ENCODE measurements at regions of chr14 and their contacts with region 1.

Region 1: DNA sequence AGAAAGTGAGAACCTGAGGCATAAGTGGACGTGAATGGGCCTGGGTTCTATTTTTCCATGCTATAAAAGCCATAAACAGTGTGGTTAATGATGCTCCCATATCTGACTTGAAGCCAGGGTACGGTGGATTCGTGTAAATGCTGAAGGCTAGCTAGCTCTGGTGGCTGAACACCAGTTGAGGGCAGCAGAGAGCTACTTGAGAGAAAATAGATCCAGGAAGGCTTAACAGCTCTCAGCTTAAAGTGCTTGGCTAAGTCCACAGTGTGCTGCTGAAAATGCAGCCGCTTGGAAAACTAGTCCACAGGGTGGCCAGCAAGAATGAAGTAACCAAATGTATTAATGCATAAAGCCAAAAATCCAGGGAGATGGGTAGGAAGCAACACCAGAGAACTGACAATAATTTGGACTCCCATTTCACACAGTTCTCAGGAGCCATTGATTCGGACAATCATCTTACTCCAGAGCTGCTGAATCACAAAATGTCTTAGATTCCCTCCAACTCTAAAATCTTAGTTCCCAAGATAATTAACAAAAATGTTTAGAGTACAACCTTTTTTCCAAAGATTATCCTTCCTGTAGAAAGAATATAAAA is 15.0 kb upstream of the FOXG1 start:
- DNase-seq: peak; percentile 50
- ATAC-seq: peak; percentile 98
- H3K4me3 Mint-ChIP-seq: no peak overlapping the region
- H3K27ac Mint-ChIP-seq: no peak overlapping the region
- H3K4me1 Mint-ChIP-seq: peaks cover 18% of the 10 kb centered on the region
- H3K27me3 Mint-ChIP-seq: peaks cover 35% of the 10 kb centered on the region
- CTCF ChIP-seq: no peak; the same call in 1 of the 2 replicates

Region 2: DNA sequence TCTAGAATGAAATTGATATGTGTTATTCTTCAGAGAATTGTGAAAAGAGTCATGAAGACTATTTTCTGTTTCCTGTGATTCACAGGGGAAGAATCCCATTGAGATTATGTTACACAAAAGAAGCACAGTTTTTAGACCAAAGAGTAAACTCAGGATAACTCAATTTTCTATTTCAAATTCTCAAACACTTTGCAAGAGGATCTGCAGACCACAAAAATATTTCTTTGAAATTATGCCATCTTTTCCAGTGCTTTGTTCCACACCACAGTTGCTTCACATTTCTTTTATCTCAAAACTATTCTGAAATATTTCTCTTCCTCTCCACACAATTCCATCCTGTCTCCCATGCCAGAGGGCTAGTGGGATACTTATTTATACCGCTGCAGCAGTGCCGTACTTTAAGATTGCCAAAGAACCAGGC is 173.8 kb before region 1 on chr14:
- CTCF ChIA-PET with region 1: no interaction called
- POLR2A ChIA-PET with region 1: no interaction called
- DNase-seq: no peak
- ATAC-seq: no peak
- H3K4me3 Mint-ChIP-seq: no peak overlapping the region
- H3K27ac Mint-ChIP-seq: no peak overlapping the region
- H3K4me1 Mint-ChIP-seq: no peaks in the 10 kb centered on the region
- H3K27me3 Mint-ChIP-seq: peaks cover 2% of the 10 kb centered on the region; the same call in 1 of the 2 replicates
- CTCF ChIP-seq: no peak

Region 3: GRCh38 chr14:28766469-28767238 is 15.1 kb after region 1 on chr14 and contains the start of gene FOXG1:
- CTCF ChIA-PET with region 1: interaction called, 60 read pairs
- POLR2A ChIA-PET with region 1: interaction called, 3 read pairs
- DNase-seq: peak; percentile 64
- ATAC-seq: peak; percentile 46
- H3K4me3 Mint-ChIP-seq: peak within 1 kb of the TSS; percentile 77
- H3K27ac Mint-ChIP-seq: no peak within 1 kb of the TSS
- H3K4me1 Mint-ChIP-seq: peaks cover 35% of the 10 kb centered on the region
- H3K27me3 Mint-ChIP-seq: peaks cover 97% of the 10 kb centered on the region
- CTCF ChIP-seq: no peak
- total RNA-seq, gene FOXG1: 0.09 to 0.18 TPM (median 0.16 TPM) in 3 replicates

Region 4: GRCh38 chr14:29521526-29522137 is 770.1 kb after region 1 on chr14:
- CTCF ChIA-PET with region 1: interaction called, 12 read pairs
- POLR2A ChIA-PET with region 1: no interaction called
- DNase-seq: peak; percentile 51
- ATAC-seq: peak; percentile 81
- H3K4me3 Mint-ChIP-seq: no peak overlapping the region
- H3K27ac Mint-ChIP-seq: no peak overlapping the region
- H3K4me1 Mint-ChIP-seq: no peaks in the 10 kb centered on the region
- H3K27me3 Mint-ChIP-seq: no peaks in the 10 kb centered on the region; the same call in 1 of the 2 replicates
- CTCF ChIP-seq: peak; percentile 36; the same call in 1 of the 2 replicates